Heart right ventricle (tissue), 16 donors: ENCODE measurements at regions of chr6 and their contacts with region 1.

Region 1: GRCh38 chr6:169751242-169752073 is at the starts of genes DYNLT2 and ERMARD:
- DNase-seq: peak; percentile 93 to 94
- ATAC-seq: peak; percentile 98 to 100 (median 99)
- H3K4me3 ChIP-seq: peak within 1 kb of the TSS; percentile 53 to 96 (median 88)
- H3K27ac ChIP-seq: peak within 1 kb of the TSS; percentile 81 to 99 (median 96)
- H3K4me1 ChIP-seq: peaks cover 2 to 32% (median 24%) of the 10 kb centered on the region in 9 donors
- H3K27me3 ChIP-seq: no peaks in the 10 kb centered on the region
- CTCF ChIP-seq: peak in 6 of 9 donors; percentile 12 to 44 (median 37)
- total RNA-seq, gene DYNLT2: 0.19 to 1.1 (median 0.61) TPM
- total RNA-seq, gene ERMARD: 7.5 to 14.9 (median 9.6) TPM

Region 2: GRCh38 chr6:169689247-169689646 is 62.2 kb before region 1 on chr6:
- intact Hi-C with region 1: no loop called
- DNase-seq: no peak
- ATAC-seq: no peak
- H3K4me3 ChIP-seq: no peak overlapping the region
- H3K27ac ChIP-seq: no peak overlapping the region
- H3K4me1 ChIP-seq: no peaks in the 10 kb centered on the region
- H3K27me3 ChIP-seq: no peaks in the 10 kb centered on the region
- CTCF ChIP-seq: no peak

Region 3: GRCh38 chr6:169701954-169702839 is 49.3 kb before region 1 on chr6 and contains the starts of genes C6orf120 and WDR27:
- intact Hi-C with region 1: loop called in 1 of 10 experiments (anchors 5 kb)
- DNase-seq: peak; percentile 96 to 97
- ATAC-seq: peak; percentile 98 to 99 (median 98)
- H3K4me3 ChIP-seq: peak within 1 kb of the TSS; percentile 78 to 97 (median 88)
- H3K27ac ChIP-seq: peak within 1 kb of the TSS; percentile 83 to 98 (median 94)
- H3K4me1 ChIP-seq: peaks cover 3 to 63% (median 44%) of the 10 kb centered on the region in 9 donors
- H3K27me3 ChIP-seq: no peaks in the 10 kb centered on the region
- CTCF ChIP-seq: peak in 3 of 9 donors; percentile 15 to 29 (median 28)
- total RNA-seq, gene C6orf120: 12.4 to 18.9 (median 14.1) TPM
- total RNA-seq, gene WDR27: 5.1 to 11.0 (median 6.6) TPM

Region 4: GRCh38 chr6:169723200-169723909 is 28.1 kb before region 1 on chr6:
- intact Hi-C with region 1: loop called in 2 of 10 experiments (anchors 1 to 2 kb)
- DNase-seq: peak; percentile 87
- ATAC-seq: peak; percentile 73 to 90 (median 86)
- H3K4me3 ChIP-seq: peak overlapping the region; percentile 50 to 82 (median 71)
- H3K27ac ChIP-seq: peak overlapping the region; percentile 82 to 97 (median 90)
- H3K4me1 ChIP-seq: peaks cover 8 to 34% (median 27%) of the 10 kb centered on the region in 9 donors
- H3K27me3 ChIP-seq: no peaks in the 10 kb centered on the region
- CTCF ChIP-seq: peak in 1 of 9 donors; percentile 15

Region 5: GRCh38 chr6:169859978-169860703 is 108.7 kb after region 1 on chr6:
- intact Hi-C with region 1: no loop called
- DNase-seq: peak in 1 of 2 donors; percentile 30
- ATAC-seq: peak; percentile 55 to 87 (median 78)
- H3K4me3 ChIP-seq: no peak overlapping the region
- H3K27ac ChIP-seq: peak overlapping the region in 6 of 10 donors; percentile 30 to 64 (median 48)
- H3K4me1 ChIP-seq: peaks cover 3 to 36% (median 8%) of the 10 kb centered on the region in 9 donors
- H3K27me3 ChIP-seq: peaks cover 0 to 3% (median 0%) of the 10 kb centered on the region in 7 donors
- CTCF ChIP-seq: no peak